Calu3 (cell line): ENCODE measurements at regions of chr2 and their contacts with region 1.

Region 1: DNA sequence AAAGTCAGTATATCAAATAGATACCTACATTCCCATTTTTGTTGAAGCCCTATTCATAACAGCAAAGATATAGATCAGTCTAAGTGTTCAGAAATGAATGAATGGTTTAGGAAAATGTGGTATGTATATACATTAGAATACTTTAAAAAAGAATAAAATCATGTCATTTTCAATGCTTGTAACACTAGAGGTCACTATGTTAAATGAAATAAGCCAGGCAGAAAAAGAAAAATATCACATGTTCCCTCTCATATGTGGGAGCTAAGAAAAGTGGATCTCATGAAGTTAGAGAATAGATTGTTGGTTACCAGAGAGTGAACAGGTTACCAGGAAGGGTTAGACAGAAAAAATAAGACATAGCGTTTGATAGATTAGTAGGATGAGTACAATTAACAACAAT is 1111.0 kb upstream of the SLC39A10 start:
- DNase-seq: no peak
- H3K4me3 Mint-ChIP-seq: no peak overlapping the region
- H3K27ac Mint-ChIP-seq: no peak overlapping the region
- H3K4me1 Mint-ChIP-seq: peaks cover 21% of the 10 kb centered on the region
- H3K27me3 Mint-ChIP-seq: no peaks in the 10 kb centered on the region
- CTCF ChIP-seq: peak; percentile 32

Region 2: GRCh38 chr2:194591192-194591591 is 45.2 kb after region 1 on chr2:
- CTCF ChIA-PET with region 1: no interaction called
- intact Hi-C with region 1: no loop called
- DNase-seq: no peak
- H3K4me3 Mint-ChIP-seq: no peak overlapping the region
- H3K27ac Mint-ChIP-seq: peak overlapping the region; percentile 14
- H3K4me1 Mint-ChIP-seq: no peaks in the 10 kb centered on the region
- H3K27me3 Mint-ChIP-seq: no peaks in the 10 kb centered on the region
- CTCF ChIP-seq: no peak

Region 3: GRCh38 chr2:194616334-194616733 is 70.4 kb after region 1 on chr2:
- CTCF ChIA-PET with region 1: no interaction called
- intact Hi-C with region 1: no loop called
- DNase-seq: no peak
- H3K4me3 Mint-ChIP-seq: no peak overlapping the region
- H3K27ac Mint-ChIP-seq: no peak overlapping the region
- H3K4me1 Mint-ChIP-seq: no peaks in the 10 kb centered on the region
- H3K27me3 Mint-ChIP-seq: no peaks in the 10 kb centered on the region
- CTCF ChIP-seq: no peak

Region 4: DNA sequence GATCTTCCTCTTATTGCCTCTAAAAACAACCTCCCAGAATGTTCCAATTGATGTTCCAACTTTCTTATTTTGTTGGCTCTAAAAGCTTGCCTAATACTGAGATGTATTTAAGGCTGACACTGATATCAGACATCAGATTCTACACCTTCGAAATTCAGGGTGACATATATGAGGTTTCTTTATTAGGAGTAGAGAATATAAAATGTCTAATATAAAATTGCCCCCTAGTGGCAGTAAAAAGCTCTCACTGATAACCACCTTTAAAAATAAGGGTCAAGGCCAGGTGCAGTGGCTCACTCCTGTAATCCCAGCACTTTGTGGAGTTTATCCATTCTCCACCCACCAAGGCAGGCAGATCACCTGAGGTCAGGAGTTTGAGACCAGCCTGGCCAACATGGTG is 321.4 kb after region 1 on chr2:
- CTCF ChIA-PET with region 1: interaction called, 3 read pairs
- intact Hi-C with region 1: loop called (anchors 2 kb)
- DNase-seq: peak; percentile 3
- H3K4me3 Mint-ChIP-seq: no peak overlapping the region
- H3K27ac Mint-ChIP-seq: no peak overlapping the region
- H3K4me1 Mint-ChIP-seq: no peaks in the 10 kb centered on the region
- H3K27me3 Mint-ChIP-seq: no peaks in the 10 kb centered on the region
- CTCF ChIP-seq: peak; percentile 27

Region 5: GRCh38 chr2:194954218-194954617 is 408.2 kb after region 1 on chr2:
- CTCF ChIA-PET with region 1: no interaction called
- intact Hi-C with region 1: no loop called
- DNase-seq: no peak
- H3K4me3 Mint-ChIP-seq: no peak overlapping the region
- H3K27ac Mint-ChIP-seq: no peak overlapping the region
- H3K4me1 Mint-ChIP-seq: no peaks in the 10 kb centered on the region
- H3K27me3 Mint-ChIP-seq: no peaks in the 10 kb centered on the region
- CTCF ChIP-seq: no peak

Region 6: GRCh38 chr2:195392446-195393336 is 846.7 kb after region 1 on chr2:
- CTCF ChIA-PET with region 1: no interaction called
- intact Hi-C with region 1: no loop called
- DNase-seq: no peak
- H3K4me3 Mint-ChIP-seq: no peak overlapping the region
- H3K27ac Mint-ChIP-seq: no peak overlapping the region
- H3K4me1 Mint-ChIP-seq: no peaks in the 10 kb centered on the region
- H3K27me3 Mint-ChIP-seq: no peaks in the 10 kb centered on the region
- CTCF ChIP-seq: no peak

Region 7: DNA sequence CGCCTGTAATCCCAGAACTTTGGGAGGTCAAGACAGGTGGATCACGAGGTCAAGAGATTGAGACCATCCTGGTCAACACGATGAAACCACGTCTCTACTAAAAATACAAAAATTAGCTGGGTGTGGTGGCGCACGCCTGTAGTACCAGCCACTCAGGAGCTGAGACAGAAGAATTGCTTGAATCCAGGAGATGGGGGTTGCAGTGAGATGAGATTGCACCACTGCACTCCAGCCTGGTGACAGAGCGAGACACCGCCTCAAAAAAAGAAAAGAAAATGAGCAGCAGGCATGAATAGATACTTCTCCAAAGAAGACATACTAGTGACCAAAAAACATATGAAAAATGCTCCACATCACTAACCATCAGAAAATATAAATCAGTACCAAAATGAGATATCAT is 1384.1 kb after region 1 on chr2:
- CTCF ChIA-PET with region 1: no interaction called
- intact Hi-C with region 1: loop called (anchors 10 kb)
- DNase-seq: no peak
- H3K4me3 Mint-ChIP-seq: no peak overlapping the region
- H3K27ac Mint-ChIP-seq: no peak overlapping the region
- H3K4me1 Mint-ChIP-seq: no peaks in the 10 kb centered on the region
- H3K27me3 Mint-ChIP-seq: no peaks in the 10 kb centered on the region
- CTCF ChIP-seq: no peak